Head of caudate nucleus (tissue), 42 donors: ENCODE measurements at regions of chr9 and their contacts with region 1.

Region 1: GRCh38 chr9:70340572-70340971 is 73.9 kb downstream of the KLF9 start:
- DNase-seq: no peak

Region 2: GRCh38 chr9:70494221-70494620 is 153.6 kb after region 1 on chr9:
- intact Hi-C with region 1: loop called (anchors 5 kb)
- DNase-seq: peak in 3 of 42 donors; percentile 36 to 42 (median 39)

Region 3: GRCh38 chr9:70602321-70603019 is 261.9 kb after region 1 on chr9:
- intact Hi-C with region 1: loop called (anchors 5 kb)
- DNase-seq: peak in 41 of 42 donors; percentile 32 to 87 (median 68)